Activated naive CD4-positive, alpha-beta T cell treated with anti-CD3 and anti-CD28 coated beads for 36 hours (primary cell): ENCODE measurements at regions of chr14 and their contacts with region 1.

Region 1: GRCh38 chr14:63852817-63853731 is at the start of gene SYNE2:
- DNase-seq: peak; percentile 84
- H3K4me3 Mint-ChIP-seq: peak within 1 kb of the TSS; percentile 93
- H3K27ac Mint-ChIP-seq: peak within 1 kb of the TSS; percentile 87
- H3K4me1 Mint-ChIP-seq: peaks cover 38% of the 10 kb centered on the region
- H3K27me3 Mint-ChIP-seq: no peaks in the 10 kb centered on the region
- total RNA-seq, gene SYNE2: 22.1 to 22.3 TPM

Region 2: DNA sequence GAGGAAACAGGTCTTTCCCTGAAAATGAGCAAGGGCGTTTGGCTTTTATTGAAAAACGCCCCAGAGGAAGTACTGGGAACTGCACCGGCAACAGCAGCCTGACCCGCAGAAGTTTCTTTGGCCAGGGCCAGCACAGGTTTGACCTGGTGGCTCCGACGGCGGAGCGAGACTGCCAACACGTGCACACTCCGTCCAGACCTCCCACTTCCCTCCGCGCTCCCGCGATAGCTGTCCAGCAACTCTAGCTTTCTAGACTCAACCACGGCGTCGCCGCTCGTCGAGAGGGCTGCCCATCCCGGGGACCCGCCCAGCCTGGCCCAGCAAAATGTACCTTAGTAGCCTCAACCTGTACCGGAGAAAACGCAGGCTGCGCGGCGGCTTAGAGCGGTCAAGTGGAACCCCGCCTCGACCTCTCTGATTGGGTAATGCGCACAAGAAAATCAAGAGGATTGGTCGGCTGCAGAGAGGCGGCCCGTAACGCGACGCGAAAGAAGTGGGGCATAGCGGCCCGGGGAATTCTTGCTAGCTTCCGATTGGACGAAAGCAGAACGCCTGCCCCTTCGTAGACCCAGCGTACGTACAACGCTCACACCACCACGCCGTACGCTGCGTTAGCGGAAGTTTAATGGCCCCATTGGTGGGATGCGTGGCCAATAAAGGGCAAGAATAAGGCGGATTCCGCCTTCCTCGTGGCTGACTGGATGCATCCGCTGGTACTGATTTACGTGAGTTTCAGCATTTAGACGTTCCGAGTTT is 211.4 kb before region 1 on chr14 and contains the start of gene WDR89:
- CTCF ChIA-PET with region 1: no interaction called
- intact Hi-C with region 1: loop called (anchors 2 kb)
- DNase-seq: peak; percentile 98
- H3K4me3 Mint-ChIP-seq: peak within 1 kb of the TSS; percentile 76
- H3K27ac Mint-ChIP-seq: peak within 1 kb of the TSS; percentile 91
- H3K4me1 Mint-ChIP-seq: peaks cover 48% of the 10 kb centered on the region
- H3K27me3 Mint-ChIP-seq: no peaks in the 10 kb centered on the region
- total RNA-seq, gene WDR89: 26.7 to 27.7 TPM

Region 3: GRCh38 chr14:63933110-63933509 is 80.0 kb after region 1 on chr14:
- CTCF ChIA-PET with region 1: interaction called, 3 read pairs
- intact Hi-C with region 1: loop called (anchors 2 kb)
- DNase-seq: peak; percentile 8
- H3K4me3 Mint-ChIP-seq: no peak overlapping the region
- H3K27ac Mint-ChIP-seq: peak overlapping the region; percentile 2
- H3K4me1 Mint-ChIP-seq: peaks cover 19% of the 10 kb centered on the region
- H3K27me3 Mint-ChIP-seq: no peaks in the 10 kb centered on the region

Region 4: GRCh38 chr14:64294672-64295413 is 441.8 kb after region 1 on chr14:
- CTCF ChIA-PET with region 1: no interaction called
- intact Hi-C with region 1: loop called (anchors 2 kb)
- DNase-seq: peak; percentile 91
- H3K4me3 Mint-ChIP-seq: peak overlapping the region; percentile 68
- H3K27ac Mint-ChIP-seq: no peak overlapping the region
- H3K4me1 Mint-ChIP-seq: peaks cover 39% of the 10 kb centered on the region
- H3K27me3 Mint-ChIP-seq: peaks cover 18% of the 10 kb centered on the region

Region 5: GRCh38 chr14:64503478-64504309 is 650.6 kb after region 1 on chr14 and contains the start of gene ZBTB25:
- CTCF ChIA-PET with region 1: no interaction called
- intact Hi-C with region 1: loop called (anchors 2 kb)
- DNase-seq: peak; percentile 94
- H3K4me3 Mint-ChIP-seq: peak within 1 kb of the TSS; percentile 91
- H3K27ac Mint-ChIP-seq: peak within 1 kb of the TSS; percentile 99
- H3K4me1 Mint-ChIP-seq: peaks cover 53% of the 10 kb centered on the region
- H3K27me3 Mint-ChIP-seq: no peaks in the 10 kb centered on the region
- total RNA-seq, gene ZBTB25: 22.6 to 23.5 TPM